Ovary (tissue), 10 donors: ENCODE measurements at regions of chr1 and their contacts with region 1.

Region 1: GRCh38 chr1:38990738-38991639 is at the start of gene AKIRIN1:
- DNase-seq: peak; percentile 98 to 99 (median 99)
- H3K4me3 ChIP-seq: peak within 1 kb of the TSS; percentile 99
- H3K27ac ChIP-seq: peak within 1 kb of the TSS; percentile 68 to 83
- H3K4me1 ChIP-seq: peaks cover 5% of the 10 kb centered on the region
- H3K27me3 ChIP-seq: no peaks in the 10 kb centered on the region
- CTCF ChIP-seq: peak in 2 of 3 donors; percentile 36 to 47
- EP300 ChIP-seq: no peak
- POLR2A ChIP-seq: peak; percentile 97
- total RNA-seq, gene AKIRIN1: 19.1 to 49.0 (median 42.4) TPM

Region 2: GRCh38 chr1:38873027-38873969 is 117.7 kb before region 1 on chr1 and contains the start of gene MYCBP:
- intact Hi-C with region 1: loop called in 2 of 4 experiments (anchors 10 kb)
- DNase-seq: peak; percentile 94 to 97 (median 94)
- H3K4me3 ChIP-seq: peak within 1 kb of the TSS; percentile 98
- H3K27ac ChIP-seq: peak within 1 kb of the TSS; percentile 2 to 34
- H3K4me1 ChIP-seq: no peaks in the 10 kb centered on the region
- H3K27me3 ChIP-seq: no peaks in the 10 kb centered on the region
- CTCF ChIP-seq: peak in 2 of 3 donors; percentile 10 to 51
- EP300 ChIP-seq: no peak
- POLR2A ChIP-seq: no peak
- total RNA-seq, gene MYCBP: 8.8 to 15.2 (median 12.2) TPM

Region 3: DNA sequence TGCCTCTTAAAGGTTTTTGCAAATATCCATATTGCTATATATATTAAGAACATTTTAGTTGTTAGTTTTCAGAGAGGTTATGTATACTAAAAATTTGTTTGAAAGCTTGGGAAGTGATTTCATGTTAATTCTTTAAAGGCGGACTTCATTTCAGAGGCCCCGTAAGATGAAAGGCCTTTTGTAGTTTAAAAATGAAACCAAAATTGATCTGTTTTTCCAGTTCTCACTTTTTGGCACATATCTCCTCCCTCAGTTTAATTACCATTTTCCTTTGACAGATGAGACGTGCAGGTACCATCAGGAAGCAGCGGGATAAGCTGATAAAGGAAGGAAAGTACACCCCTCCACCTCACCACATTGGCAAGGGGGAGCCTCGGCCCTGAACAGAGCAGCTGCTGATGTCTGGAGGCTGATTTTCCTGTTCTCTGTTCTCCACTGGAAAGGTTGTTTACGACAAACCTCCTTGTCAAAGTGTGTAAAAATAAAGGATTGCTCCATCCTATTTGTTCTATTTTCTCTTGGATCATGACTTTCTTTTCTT is 43.2 kb after region 1 on chr1:
- intact Hi-C with region 1: no loop called
- DNase-seq: no peak
- H3K4me3 ChIP-seq: no peak overlapping the region
- H3K27ac ChIP-seq: no peak overlapping the region
- H3K4me1 ChIP-seq: no peaks in the 10 kb centered on the region
- H3K27me3 ChIP-seq: no peaks in the 10 kb centered on the region
- CTCF ChIP-seq: no peak
- EP300 ChIP-seq: no peak
- POLR2A ChIP-seq: no peak

Region 4: DNA sequence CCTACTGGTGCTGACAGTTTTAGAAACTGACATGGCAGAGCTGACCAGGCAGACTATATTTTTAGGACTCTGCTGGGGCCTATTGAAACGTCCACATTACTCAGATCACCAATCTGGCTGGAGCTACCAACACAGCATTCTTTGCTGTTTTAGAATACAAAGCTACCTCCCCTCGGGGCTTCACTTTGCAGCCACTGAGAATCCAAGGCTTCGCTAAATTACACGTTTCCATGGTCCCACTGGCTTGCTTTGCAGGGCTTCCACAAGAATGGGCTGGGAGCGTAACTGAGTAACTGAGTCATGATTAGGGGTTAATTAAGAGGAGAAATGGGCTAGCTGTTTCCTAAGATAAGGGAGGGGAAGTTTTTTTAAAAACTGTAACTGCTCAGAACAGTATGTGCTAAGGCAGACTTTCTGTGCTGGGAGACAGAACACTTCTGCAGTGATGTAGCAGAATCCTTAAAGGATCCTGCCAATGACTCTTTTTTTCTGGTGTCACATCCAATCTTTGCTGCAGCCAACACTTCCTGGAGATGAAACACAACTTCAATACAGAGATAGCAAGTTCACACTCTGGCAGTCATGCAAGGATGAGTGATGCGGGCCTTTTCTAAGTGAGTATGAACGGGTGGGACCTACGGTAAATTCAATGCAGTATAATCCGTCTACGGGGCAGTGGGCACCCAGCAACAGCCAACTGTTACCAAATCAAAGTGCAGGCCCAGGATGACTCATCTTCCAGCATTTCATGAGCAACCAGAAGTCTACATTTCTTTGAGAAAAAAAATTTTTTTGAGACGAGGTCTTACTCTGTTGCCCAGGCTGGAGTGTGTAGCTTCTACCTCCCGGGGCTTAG is 56.6 kb after region 1 on chr1:
- intact Hi-C with region 1: no loop called
- DNase-seq: peak in 2 of 5 donors; percentile 24 to 67
- H3K4me3 ChIP-seq: no peak overlapping the region
- H3K27ac ChIP-seq: no peak overlapping the region
- H3K4me1 ChIP-seq: no peaks in the 10 kb centered on the region
- H3K27me3 ChIP-seq: no peaks in the 10 kb centered on the region
- CTCF ChIP-seq: no peak
- EP300 ChIP-seq: peak; percentile 77
- POLR2A ChIP-seq: no peak

Region 5: DNA sequence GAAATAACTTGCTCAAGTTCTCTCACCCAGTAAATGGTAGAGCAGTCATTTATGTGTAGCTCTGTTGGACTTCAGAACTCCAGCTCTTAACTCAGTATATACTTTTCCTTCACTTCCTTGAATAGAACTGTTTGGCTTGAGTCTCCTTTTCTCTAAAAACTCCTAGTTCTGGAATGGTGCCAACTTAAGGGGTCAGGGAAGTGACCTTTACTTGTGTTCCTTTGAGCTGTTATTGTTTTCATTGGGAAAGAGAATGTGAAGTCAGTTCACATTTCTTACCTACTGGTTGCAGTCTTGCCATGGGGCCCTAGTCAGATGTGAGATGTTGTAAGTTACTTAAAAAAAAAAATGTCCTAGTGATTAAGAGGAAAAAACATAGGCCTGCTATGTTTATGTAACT is 136.5 kb after region 1 on chr1:
- intact Hi-C with region 1: no loop called
- DNase-seq: peak in 3 of 5 donors; percentile 40 to 69 (median 49)
- H3K4me3 ChIP-seq: no peak overlapping the region
- H3K27ac ChIP-seq: peak overlapping the region in 1 of 2 donors; percentile 37
- H3K4me1 ChIP-seq: peaks cover 5% of the 10 kb centered on the region
- H3K27me3 ChIP-seq: no peaks in the 10 kb centered on the region
- CTCF ChIP-seq: no peak
- EP300 ChIP-seq: no peak
- POLR2A ChIP-seq: no peak